Pancreas (tissue), 10 donors: ENCODE measurements at regions of chr14 and their contacts with region 1.

Region 1: GRCh38 chr14:105489542-105490266 is 1.3 kb upstream of the TEDC1 start:
- DNase-seq: peak; percentile 82 to 93 (median 90)
- ATAC-seq: peak; percentile 51 to 59 (median 58)
- H3K4me3 ChIP-seq: peak overlapping the region; percentile 42 to 92 (median 52)
- H3K27ac ChIP-seq: peak overlapping the region; percentile 92 to 98 (median 96)
- H3K4me1 ChIP-seq: peaks cover 0 to 27% (median 4%) of the 10 kb centered on the region in 3 donors
- H3K27me3 ChIP-seq: peaks cover 0 to 11% (median 0%) of the 10 kb centered on the region in 4 donors
- CTCF ChIP-seq: peak; percentile 31 to 47 (median 34)

Region 2: GRCh38 chr14:105374383-105374782 is 115.3 kb before region 1 on chr14:
- intact Hi-C with region 1: loop called in 2 of 3 experiments (anchors 5 kb)
- DNase-seq: no peak
- ATAC-seq: no peak
- H3K4me3 ChIP-seq: no peak overlapping the region
- H3K27ac ChIP-seq: no peak overlapping the region
- H3K4me1 ChIP-seq: no peaks in the 10 kb centered on the region
- H3K27me3 ChIP-seq: no peaks in the 10 kb centered on the region
- CTCF ChIP-seq: no peak

Region 3: GRCh38 chr14:106058342-106058741 is 568.6 kb after region 1 on chr14:
- intact Hi-C with region 1: no loop called
- DNase-seq: no peak
- ATAC-seq: no peak
- H3K4me3 ChIP-seq: no peak overlapping the region
- H3K27ac ChIP-seq: no peak overlapping the region
- H3K4me1 ChIP-seq: no peaks in the 10 kb centered on the region
- H3K27me3 ChIP-seq: peaks cover 0 to 11% (median 4%) of the 10 kb centered on the region in 4 donors
- CTCF ChIP-seq: no peak